Naive thymus-derived CD4-positive, alpha-beta T cell (primary cell): ENCODE measurements at regions of chr4 and their contacts with region 1.

Region 1: GRCh38 chr4:62156205-62156604 is 956.1 kb downstream of the ADGRL3 start:
- DNase-seq: no peak
- ATAC-seq: no peak
- H3K4me3 ChIP-seq: no peak overlapping the region
- H3K4me3 Mint-ChIP-seq: no peak overlapping the region
- H3K27ac ChIP-seq: no peak overlapping the region
- H3K27ac Mint-ChIP-seq: no peak overlapping the region
- H3K4me1 ChIP-seq: no peaks in the 10 kb centered on the region
- H3K4me1 Mint-ChIP-seq: no peaks in the 10 kb centered on the region
- H3K27me3 ChIP-seq: no peaks in the 10 kb centered on the region
- H3K27me3 Mint-ChIP-seq: no peaks in the 10 kb centered on the region

Region 2: GRCh38 chr4:62135565-62136156 is 20.5 kb before region 1 on chr4:
- CTCF ChIA-PET with region 1: no interaction called
- POLR2A ChIA-PET with region 1: no interaction called
- intact Hi-C with region 1: no loop called
- DNase-seq: no peak
- ATAC-seq: no peak
- H3K4me3 ChIP-seq: no peak overlapping the region
- H3K4me3 Mint-ChIP-seq: no peak overlapping the region
- H3K27ac ChIP-seq: no peak overlapping the region
- H3K27ac Mint-ChIP-seq: no peak overlapping the region
- H3K4me1 ChIP-seq: no peaks in the 10 kb centered on the region
- H3K4me1 Mint-ChIP-seq: no peaks in the 10 kb centered on the region
- H3K27me3 ChIP-seq: no peaks in the 10 kb centered on the region
- H3K27me3 Mint-ChIP-seq: no peaks in the 10 kb centered on the region

Region 3: DNA sequence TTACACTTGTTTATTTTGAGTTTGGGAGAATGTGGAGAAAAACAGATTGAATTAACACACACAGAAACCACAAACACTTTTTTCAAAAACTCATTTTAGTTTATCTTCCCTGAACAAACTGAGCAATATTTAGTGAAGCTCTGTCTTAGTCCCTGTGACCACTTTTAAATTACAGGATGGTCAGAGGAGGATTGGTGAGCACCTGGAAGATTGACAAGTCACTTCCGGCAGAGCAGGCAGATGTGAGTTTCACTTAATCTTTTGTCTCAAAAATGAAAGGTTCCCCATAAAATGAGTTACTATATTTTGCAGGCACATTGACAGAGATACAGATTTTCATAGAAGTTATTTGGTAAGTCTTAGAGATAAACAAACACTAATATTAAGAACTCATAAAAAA is 14.0 kb after region 1 on chr4:
- CTCF ChIA-PET with region 1: no interaction called
- POLR2A ChIA-PET with region 1: no interaction called
- intact Hi-C with region 1: no loop called
- DNase-seq: no peak
- ATAC-seq: no peak
- H3K4me3 ChIP-seq: no peak overlapping the region
- H3K4me3 Mint-ChIP-seq: no peak overlapping the region
- H3K27ac ChIP-seq: no peak overlapping the region
- H3K27ac Mint-ChIP-seq: no peak overlapping the region
- H3K4me1 ChIP-seq: no peaks in the 10 kb centered on the region
- H3K4me1 Mint-ChIP-seq: no peaks in the 10 kb centered on the region
- H3K27me3 ChIP-seq: no peaks in the 10 kb centered on the region
- H3K27me3 Mint-ChIP-seq: no peaks in the 10 kb centered on the region

Region 4: DNA sequence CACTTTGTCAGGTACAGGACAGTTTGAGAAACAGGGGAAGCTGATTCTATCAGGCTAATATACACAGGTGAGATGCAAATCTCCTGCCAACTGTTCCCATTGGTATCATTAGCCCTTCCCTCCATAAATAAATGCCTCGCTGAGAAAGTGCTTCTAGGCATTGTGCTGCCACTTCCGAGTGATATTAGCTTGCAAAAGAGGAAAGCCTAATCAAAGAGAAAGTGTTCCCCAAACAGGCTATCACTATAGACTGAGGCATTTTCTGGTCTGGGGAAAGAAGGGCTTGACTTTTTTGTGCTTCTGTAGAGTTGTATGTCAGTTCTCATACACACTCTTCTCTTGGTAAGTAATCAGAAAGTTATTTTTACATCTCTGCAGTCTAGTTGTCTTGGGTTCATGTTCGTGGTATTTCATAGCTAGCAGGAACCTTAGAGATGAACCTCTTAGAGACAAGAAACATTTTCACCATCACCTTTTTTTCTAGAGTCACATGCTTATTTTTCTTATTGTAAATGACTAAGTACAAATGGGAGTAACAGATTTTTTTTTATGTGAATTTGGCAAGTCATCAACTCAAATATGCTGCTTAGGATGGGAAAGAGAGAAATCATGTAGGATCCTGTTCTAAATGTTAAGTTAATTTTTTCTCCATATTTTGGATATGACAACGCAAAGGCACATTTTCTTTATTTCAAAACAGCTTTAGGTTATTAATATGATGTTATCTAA is 53.7 kb after region 1 on chr4:
- CTCF ChIA-PET with region 1: no interaction called
- POLR2A ChIA-PET with region 1: no interaction called
- intact Hi-C with region 1: loop called in 1 of 2 experiments (anchors 10 kb)
- DNase-seq: no peak
- ATAC-seq: no peak
- H3K4me3 ChIP-seq: no peak overlapping the region
- H3K4me3 Mint-ChIP-seq: no peak overlapping the region
- H3K27ac ChIP-seq: no peak overlapping the region
- H3K27ac Mint-ChIP-seq: no peak overlapping the region
- H3K4me1 ChIP-seq: no peaks in the 10 kb centered on the region
- H3K4me1 Mint-ChIP-seq: peaks cover 0 to 2% (median 0%) of the 10 kb centered on the region in 7 donors
- H3K27me3 ChIP-seq: no peaks in the 10 kb centered on the region
- H3K27me3 Mint-ChIP-seq: no peaks in the 10 kb centered on the region